ENCODE measurements at regions of chr20 and their contacts with region 1.

Region 1: GRCh38 chr20:17682103-17682888 is at the start of gene RRBP1:
- DNase-seq: peak; percentile 98
- H3K4me3 Mint-ChIP-seq: peak within 1 kb of the TSS; percentile 85
- H3K27ac Mint-ChIP-seq: peak within 1 kb of the TSS; percentile 92
- H3K4me1 Mint-ChIP-seq: peaks cover 34% of the 10 kb centered on the region
- H3K27me3 Mint-ChIP-seq: peaks cover 42% of the 10 kb centered on the region

Region 2: GRCh38 chr20:17666481-17666880 is 15.8 kb before region 1 on chr20:
- CTCF ChIA-PET with region 1: interaction called, 16 read pairs
- DNase-seq: no peak
- H3K4me3 Mint-ChIP-seq: no peak overlapping the region
- H3K27ac Mint-ChIP-seq: no peak overlapping the region
- H3K4me1 Mint-ChIP-seq: peaks cover 41% of the 10 kb centered on the region
- H3K27me3 Mint-ChIP-seq: no peaks in the 10 kb centered on the region

Region 3: DNA sequence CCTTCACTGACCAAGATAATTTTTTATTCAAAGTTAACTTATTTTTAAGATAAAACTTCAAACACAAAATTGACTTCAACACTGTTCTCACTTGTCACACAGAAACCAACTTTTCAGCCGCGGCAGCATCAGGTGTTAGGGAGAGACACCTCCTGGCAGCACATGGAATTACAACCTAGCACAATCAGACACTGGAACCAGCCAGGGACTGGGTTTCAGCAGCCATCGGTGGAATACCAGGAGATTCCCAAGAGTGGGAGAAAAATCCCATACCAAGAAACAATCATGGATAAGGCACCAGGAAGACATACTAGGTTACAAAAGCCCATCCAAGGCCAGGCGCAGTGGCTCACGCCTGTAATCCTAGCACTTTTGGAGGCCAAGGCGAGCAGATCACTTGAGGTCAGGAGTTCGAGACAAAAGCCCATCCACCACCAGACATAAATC is 216.3 kb after region 1 on chr20:
- CTCF ChIA-PET with region 1: interaction called, 25 read pairs
- DNase-seq: peak; percentile 77
- H3K4me3 Mint-ChIP-seq: no peak overlapping the region
- H3K27ac Mint-ChIP-seq: no peak overlapping the region
- H3K4me1 Mint-ChIP-seq: peaks cover 13% of the 10 kb centered on the region
- H3K27me3 Mint-ChIP-seq: peaks cover 62% of the 10 kb centered on the region